ENCODE measurements at regions of chr2 and their contacts with region 1.

Region 1: GRCh38 chr2:47334356-47335136 is 68.4 kb upstream of the MSH2 start:
- DNase-seq: no peak
- ATAC-seq: no peak

Region 2: DNA sequence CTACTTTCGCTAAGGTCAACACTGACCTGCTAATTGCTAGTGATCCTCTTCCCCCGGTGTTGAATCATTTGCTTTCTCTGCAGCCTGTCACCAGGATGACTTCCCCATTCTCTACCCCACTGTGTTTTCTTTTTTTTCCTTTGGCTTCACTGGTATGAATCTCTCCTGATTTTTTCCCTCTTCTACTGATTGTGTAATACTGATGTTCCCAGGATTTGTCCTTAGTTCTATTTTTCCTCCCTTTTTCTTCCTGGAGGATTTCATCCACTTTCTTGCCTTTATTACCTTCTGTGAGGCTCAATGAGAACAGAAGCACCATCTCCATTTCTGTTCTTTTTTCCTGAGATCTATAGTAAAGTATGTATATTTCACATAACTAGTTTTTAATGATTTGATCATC is 54.3 kb after region 1 on chr2:
- intact Hi-C with region 1: loop called in 1 of 2 experiments (anchors 2 kb)
- DNase-seq: no peak
- ATAC-seq: no peak